GM10248 (cell line): ENCODE measurements at regions of chr7 and their contacts with region 1.

Region 1: DNA sequence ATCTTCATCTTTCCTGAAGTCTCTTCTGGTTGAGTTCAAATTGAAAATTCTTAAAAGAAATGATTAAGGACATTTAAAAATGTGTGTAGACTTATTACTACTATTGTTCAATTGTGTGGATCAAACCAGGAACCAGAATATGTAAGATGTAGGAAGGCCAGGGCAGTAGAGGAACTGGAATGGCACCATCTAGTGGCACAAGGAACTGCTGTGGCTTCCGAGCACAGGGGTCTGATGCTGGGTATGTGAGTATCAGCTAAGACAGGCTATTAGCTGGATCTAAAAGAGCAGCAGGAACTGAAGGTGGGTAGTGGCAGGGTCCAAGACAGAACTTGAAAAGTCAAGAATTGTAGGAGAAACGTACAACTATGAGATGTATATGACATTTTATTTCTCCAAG is 247.3 kb downstream of the SEMA3A start:
- DNase-seq: peak; percentile 25
- CTCF ChIP-seq: peak; percentile 40

Region 2: DNA sequence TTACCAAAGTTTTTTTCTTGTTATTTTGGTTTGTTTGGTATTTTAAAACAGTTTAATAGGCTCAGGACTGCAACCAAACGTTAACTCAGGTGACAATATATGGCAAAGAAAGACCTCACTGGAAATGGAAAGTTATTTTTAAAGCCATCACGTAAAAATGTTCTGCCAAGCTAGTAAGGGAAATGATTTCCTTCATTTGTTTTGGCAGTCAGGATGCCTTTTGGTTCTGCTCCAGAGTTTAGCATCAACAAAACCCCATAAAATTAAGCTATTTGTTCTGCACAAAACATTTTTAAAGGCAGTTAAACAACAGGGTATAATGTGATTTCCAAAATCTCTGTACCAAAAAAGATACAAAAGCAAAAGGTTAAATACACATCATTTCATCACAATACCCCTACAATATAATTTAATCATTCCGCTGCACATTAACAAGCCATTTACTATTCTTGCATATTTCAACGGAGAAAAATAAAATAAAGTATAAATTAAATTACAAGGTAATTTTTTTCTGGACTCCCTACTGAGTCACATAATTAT is 470.7 kb before region 1 on chr7:
- CTCF ChIA-PET with region 1: no interaction called
- POLR2A ChIA-PET with region 1: no interaction called
- DNase-seq: no peak
- CTCF ChIP-seq: no peak

Region 3: DNA sequence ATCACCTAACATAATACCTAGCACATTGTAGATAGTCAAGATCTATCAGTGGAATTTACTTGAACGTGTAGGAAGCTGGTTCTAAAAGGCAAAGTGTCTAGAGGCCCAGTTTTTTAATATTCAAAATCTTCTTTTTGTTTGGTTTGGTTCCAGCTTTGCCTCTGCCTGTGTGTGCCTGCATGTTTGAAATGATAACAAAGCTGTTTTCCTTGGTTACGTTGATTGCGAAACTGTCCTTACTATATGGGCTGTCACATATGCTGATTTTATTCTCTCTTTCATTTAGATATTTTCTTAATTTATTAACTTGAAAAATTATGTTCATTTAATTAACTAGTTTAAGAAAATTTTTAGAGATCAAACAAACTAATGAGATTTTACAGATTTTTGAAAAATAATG is 10.1 kb after region 1 on chr7:
- CTCF ChIA-PET with region 1: interaction called, 10 read pairs
- POLR2A ChIA-PET with region 1: no interaction called
- DNase-seq: no peak
- CTCF ChIP-seq: no peak

Region 4: DNA sequence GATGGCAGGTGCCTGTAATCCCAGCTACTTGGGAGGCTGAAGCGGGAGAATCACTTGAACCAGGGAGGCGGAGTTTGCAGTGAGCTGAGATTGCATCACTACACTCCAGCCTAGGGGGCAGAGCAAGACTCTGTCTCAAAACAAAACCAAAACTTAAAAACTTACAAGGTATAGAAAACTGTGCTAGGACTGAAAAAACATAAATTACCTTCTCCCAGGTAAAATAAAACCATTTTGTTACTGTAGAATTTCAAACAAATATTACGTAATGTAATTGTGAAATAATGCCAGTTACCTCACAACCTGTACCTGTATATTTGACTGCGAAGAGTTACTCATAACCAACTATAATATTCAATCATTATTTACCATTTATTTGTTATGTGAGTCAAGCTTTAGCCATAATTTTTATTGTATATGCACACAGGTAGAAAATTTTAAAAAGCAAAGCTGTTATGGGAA is 66.5 kb after region 1 on chr7:
- CTCF ChIA-PET with region 1: no interaction called
- POLR2A ChIA-PET with region 1: no interaction called
- DNase-seq: no peak
- CTCF ChIP-seq: no peak